ENCODE measurements at regions of chr3 and their contacts with region 1.

Region 1: GRCh38 chr3:134794950-134795745 is at the start of gene EPHB1:
- DNase-seq: peak; percentile 94
- ATAC-seq: peak; percentile 83
- H3K4me3 ChIP-seq: peak within 1 kb of the TSS; percentile 74
- H3K27ac ChIP-seq: peak within 1 kb of the TSS; percentile 54
- H3K4me1 ChIP-seq: 0 out of 2 replicates have a peak, but pooled peaks cover 3% of the 10 kb centered on the region
- H3K27me3 ChIP-seq: no peaks in the 10 kb centered on the region; a peak in 1 of 4 replicates
- CTCF ChIP-seq: peak; percentile 89 to 94 (median 90)
- EP300 ChIP-seq: peak in 1 of 2 experiments; percentile 14; a peak in 1 of 4 replicates
- POLR2A ChIP-seq: peak; percentile 75
- RAD21 ChIP-seq: peak; percentile 91
- polyA plus RNA-seq, gene EPHB1: 0.34 to 0.49 TPM

Region 2: GRCh38 chr3:134838599-134838998 is 43.5 kb after region 1 on chr3:
- CTCF ChIA-PET with region 1: interaction called, 22 read pairs
- POLR2A ChIA-PET with region 1: no interaction called
- RAD21 ChIA-PET with region 1: interaction called, 5 read pairs
- SMC1A ChIA-PET with region 1: interaction called, 6 read pairs
- in situ Hi-C with region 1: no loop called
- intact Hi-C with region 1: loop called (anchors 5 kb)
- DNase-seq: no peak
- ATAC-seq: no peak
- H3K4me3 ChIP-seq: no peak overlapping the region
- H3K27ac ChIP-seq: no peak overlapping the region
- H3K4me1 ChIP-seq: peaks cover 10% of the 10 kb centered on the region
- H3K27me3 ChIP-seq: no peaks in the 10 kb centered on the region
- CTCF ChIP-seq: peak; percentile 4 to 44 (median 38); a peak in 4 of 6 replicates
- EP300 ChIP-seq: no peak
- POLR2A ChIP-seq: no peak
- RAD21 ChIP-seq: no peak

Region 3: DNA sequence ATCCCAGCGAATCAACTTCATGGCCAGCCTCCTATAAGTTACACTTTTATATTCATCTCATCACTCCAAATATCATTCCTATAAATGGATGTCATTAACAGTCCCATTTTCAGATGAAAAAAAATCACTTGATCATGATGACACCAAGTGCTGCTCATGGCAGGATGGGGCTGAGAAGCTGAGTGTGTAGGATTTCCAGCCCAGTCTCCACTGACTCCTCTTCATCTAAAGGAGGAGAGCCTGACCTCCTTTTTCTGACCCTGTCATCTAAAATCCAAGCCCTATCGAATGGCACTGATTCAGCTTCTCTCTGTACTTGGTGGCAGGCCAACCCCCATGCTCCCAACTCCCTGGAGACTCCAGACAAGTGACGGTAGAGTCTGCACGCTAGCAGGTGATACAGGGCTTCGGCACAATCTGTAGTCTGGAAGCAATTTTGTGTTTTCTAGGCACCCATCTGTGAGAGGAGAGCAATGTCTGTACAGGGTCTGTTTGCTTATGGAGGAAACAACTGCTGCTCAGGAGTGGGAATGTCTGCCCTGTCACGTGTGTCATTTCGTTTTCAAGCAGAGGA is 103.1 kb after region 1 on chr3:
- CTCF ChIA-PET with region 1: interaction called, 39 read pairs
- POLR2A ChIA-PET with region 1: interaction called, 11 read pairs
- RAD21 ChIA-PET with region 1: interaction called, 111 read pairs
- SMC1A ChIA-PET with region 1: interaction called, 110 read pairs
- in situ Hi-C with region 1: no loop called
- intact Hi-C with region 1: no loop called
- DNase-seq: no peak
- ATAC-seq: no peak
- H3K4me3 ChIP-seq: no peak overlapping the region
- H3K27ac ChIP-seq: no peak overlapping the region
- H3K4me1 ChIP-seq: peaks cover 12% of the 10 kb centered on the region
- H3K27me3 ChIP-seq: no peaks in the 10 kb centered on the region
- CTCF ChIP-seq: no peak
- EP300 ChIP-seq: no peak
- POLR2A ChIP-seq: no peak
- RAD21 ChIP-seq: no peak

Region 4: DNA sequence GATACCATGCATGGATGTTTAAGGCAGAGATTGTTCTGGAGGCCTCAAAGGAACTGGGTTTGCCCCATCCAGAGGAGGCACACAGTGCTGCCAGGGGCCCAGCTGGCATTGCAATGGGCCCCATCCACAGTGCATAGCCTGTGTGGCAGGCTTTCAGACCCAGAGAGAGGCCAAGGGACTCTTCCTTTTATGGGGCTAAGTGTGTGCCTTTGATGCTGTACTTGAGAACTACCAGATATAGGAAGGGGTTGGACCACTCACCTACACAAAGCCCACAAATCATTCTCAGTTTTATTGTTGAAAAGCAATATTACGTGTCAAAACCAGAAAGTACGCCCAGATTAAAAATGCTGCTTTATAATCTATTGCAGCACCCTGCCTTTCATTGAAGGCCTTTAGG is 134.8 kb after region 1 on chr3:
- CTCF ChIA-PET with region 1: interaction called, 3 read pairs
- POLR2A ChIA-PET with region 1: no interaction called
- RAD21 ChIA-PET with region 1: no interaction called
- SMC1A ChIA-PET with region 1: interaction called, 6 read pairs
- in situ Hi-C with region 1: no loop called
- intact Hi-C with region 1: loop called (anchors 1 kb)
- DNase-seq: peak; percentile 48
- ATAC-seq: peak; percentile 96
- H3K4me3 ChIP-seq: no peak overlapping the region
- H3K27ac ChIP-seq: peak overlapping the region; percentile 65
- H3K4me1 ChIP-seq: peaks cover 27% of the 10 kb centered on the region
- H3K27me3 ChIP-seq: no peaks in the 10 kb centered on the region
- CTCF ChIP-seq: no peak
- EP300 ChIP-seq: no peak
- POLR2A ChIP-seq: no peak
- RAD21 ChIP-seq: no peak

Region 5: DNA sequence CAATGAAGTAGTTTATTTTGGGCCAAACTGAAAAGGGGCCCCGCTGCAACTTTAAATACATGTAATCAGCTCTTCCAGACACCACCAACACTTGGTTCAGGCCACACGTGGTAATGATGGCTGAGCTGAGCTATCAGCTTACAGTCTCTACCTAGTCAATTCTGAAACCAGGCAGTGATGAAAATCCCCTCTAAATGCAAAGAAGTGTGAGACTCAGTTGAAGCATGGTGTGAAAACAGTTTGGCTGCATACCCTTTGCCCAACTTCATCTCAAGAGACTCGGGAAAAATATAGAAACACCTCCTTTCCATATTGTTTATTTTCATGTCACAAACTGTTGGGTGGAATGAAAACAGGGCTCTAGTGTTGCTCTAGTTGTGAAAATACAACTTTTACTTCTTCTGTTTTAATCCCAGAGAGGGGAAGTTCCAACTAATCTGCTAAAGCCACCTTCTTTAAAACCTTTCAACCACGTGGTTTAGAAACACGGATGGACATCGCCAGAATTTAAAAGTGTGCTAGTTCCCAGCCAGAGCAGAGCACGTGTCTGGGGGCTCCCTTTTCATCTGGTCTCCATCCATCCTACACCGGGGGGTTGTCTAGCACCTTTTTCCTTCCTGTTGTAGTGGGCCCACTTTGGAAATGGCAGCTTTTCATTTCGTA is 229.0 kb after region 1 on chr3:
- CTCF ChIA-PET with region 1: interaction called, 5 read pairs
- POLR2A ChIA-PET with region 1: no interaction called
- RAD21 ChIA-PET with region 1: interaction called, 21 read pairs
- SMC1A ChIA-PET with region 1: interaction called, 4 read pairs
- in situ Hi-C with region 1: no loop called
- intact Hi-C with region 1: no loop called
- DNase-seq: peak; percentile 60
- ATAC-seq: peak; percentile 99
- H3K4me3 ChIP-seq: no peak overlapping the region
- H3K27ac ChIP-seq: peak overlapping the region; percentile 48
- H3K4me1 ChIP-seq: peaks cover 1% of the 10 kb centered on the region; the same call in 1 of the 2 replicates
- H3K27me3 ChIP-seq: no peaks in the 10 kb centered on the region
- CTCF ChIP-seq: no peak
- EP300 ChIP-seq: no peak; a peak in 1 of 4 replicates
- POLR2A ChIP-seq: no peak
- RAD21 ChIP-seq: no peak

Region 6: DNA sequence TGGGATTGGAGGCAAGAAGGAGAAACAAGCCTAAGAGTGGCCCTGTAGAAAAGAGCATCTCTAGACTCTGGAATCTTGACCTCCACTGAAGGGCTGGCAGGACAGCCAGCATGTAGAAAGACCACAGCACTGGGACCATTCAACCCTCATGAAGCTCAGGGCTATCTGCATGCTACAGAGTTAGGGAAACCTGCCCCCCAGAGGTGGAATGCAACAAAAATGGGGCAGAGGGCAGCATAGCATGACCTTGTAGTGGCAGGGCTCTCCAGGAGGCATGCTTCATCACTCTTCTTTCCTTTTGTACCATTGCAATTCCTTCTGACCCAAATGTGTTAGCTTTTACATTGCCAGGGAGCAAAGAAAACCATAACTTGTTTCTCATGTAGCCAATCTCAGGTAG is 445.3 kb after region 1 on chr3:
- CTCF ChIA-PET with region 1: interaction called, 84 read pairs
- POLR2A ChIA-PET with region 1: interaction called, 3 read pairs
- RAD21 ChIA-PET with region 1: interaction called, 90 read pairs
- SMC1A ChIA-PET with region 1: interaction called, 40 read pairs
- in situ Hi-C with region 1: loop called (anchors 10 kb)
- intact Hi-C with region 1: loop called (anchors 2 kb)
- DNase-seq: no peak
- ATAC-seq: peak; percentile 89
- H3K4me3 ChIP-seq: no peak overlapping the region
- H3K27ac ChIP-seq: no peak overlapping the region
- H3K4me1 ChIP-seq: no peaks in the 10 kb centered on the region
- H3K27me3 ChIP-seq: no peaks in the 10 kb centered on the region
- CTCF ChIP-seq: peak; percentile 25 to 49 (median 34); a peak in 4 of 6 replicates
- EP300 ChIP-seq: no peak
- POLR2A ChIP-seq: no peak
- RAD21 ChIP-seq: peak; percentile 51; the same call in 1 of the 2 replicates

Region 7: GRCh38 chr3:135895106-135895733 is 1100.1 kb after region 1 on chr3:
- CTCF ChIA-PET with region 1: interaction called, 7 read pairs
- POLR2A ChIA-PET with region 1: no interaction called
- RAD21 ChIA-PET with region 1: no interaction called
- SMC1A ChIA-PET with region 1: no interaction called
- in situ Hi-C with region 1: loop called (anchors 25 kb)
- intact Hi-C with region 1: loop called (anchors 2 kb)
- DNase-seq: peak; percentile 5
- ATAC-seq: peak; percentile 53; the same call in 1 of the 3 replicates
- H3K4me3 ChIP-seq: no peak overlapping the region
- H3K27ac ChIP-seq: no peak overlapping the region
- H3K4me1 ChIP-seq: no peaks in the 10 kb centered on the region
- H3K27me3 ChIP-seq: no peaks in the 10 kb centered on the region
- CTCF ChIP-seq: peak; percentile 73 to 88 (median 81)
- EP300 ChIP-seq: no peak
- POLR2A ChIP-seq: no peak
- RAD21 ChIP-seq: peak; percentile 78